ENCODE measurements at regions of chr7 and their contacts with region 1.

Region 1: GRCh38 chr7:53794816-53795215 is 747.4 kb upstream of the VSTM2A start:
- DNase-seq: no peak
- H3K4me3 ChIP-seq: no peak overlapping the region
- H3K27ac ChIP-seq: no peak overlapping the region
- H3K4me1 ChIP-seq: no peaks in the 10 kb centered on the region
- H3K27me3 ChIP-seq: no peaks in the 10 kb centered on the region
- CTCF ChIP-seq: no peak
- EP300 ChIP-seq: no peak
- POLR2A ChIP-seq: no peak

Region 2: DNA sequence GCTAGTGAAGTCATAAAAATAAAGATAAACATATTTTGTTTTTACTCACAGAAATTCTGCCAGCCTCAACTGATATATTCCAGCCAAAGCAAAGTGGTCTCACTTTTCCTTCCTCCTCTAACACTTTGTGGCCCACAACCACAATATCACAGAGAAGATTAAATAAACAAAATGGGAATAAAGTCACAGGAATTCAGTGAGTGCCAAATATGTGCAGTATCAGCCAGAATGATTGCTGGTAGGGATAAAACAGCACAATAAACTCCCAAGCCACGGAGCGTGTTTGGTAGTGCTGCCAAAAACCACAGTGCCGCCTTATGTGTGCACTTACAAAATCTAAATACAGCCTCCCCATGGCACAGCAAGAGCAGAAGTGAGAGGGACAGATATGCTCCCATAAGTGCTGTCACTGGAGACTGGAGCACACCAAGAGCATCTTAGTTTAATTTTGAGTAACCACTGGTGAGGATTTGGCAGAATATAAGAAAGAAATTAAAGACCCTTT is 603.6 kb before region 1 on chr7:
- in situ Hi-C with region 1: no loop called
- intact Hi-C with region 1: no loop called
- DNase-seq: no peak
- H3K4me3 ChIP-seq: no peak overlapping the region
- H3K27ac ChIP-seq: no peak overlapping the region
- H3K4me1 ChIP-seq: no peaks in the 10 kb centered on the region
- H3K27me3 ChIP-seq: no peaks in the 10 kb centered on the region
- CTCF ChIP-seq: no peak
- EP300 ChIP-seq: no peak
- POLR2A ChIP-seq: no peak

Region 3: DNA sequence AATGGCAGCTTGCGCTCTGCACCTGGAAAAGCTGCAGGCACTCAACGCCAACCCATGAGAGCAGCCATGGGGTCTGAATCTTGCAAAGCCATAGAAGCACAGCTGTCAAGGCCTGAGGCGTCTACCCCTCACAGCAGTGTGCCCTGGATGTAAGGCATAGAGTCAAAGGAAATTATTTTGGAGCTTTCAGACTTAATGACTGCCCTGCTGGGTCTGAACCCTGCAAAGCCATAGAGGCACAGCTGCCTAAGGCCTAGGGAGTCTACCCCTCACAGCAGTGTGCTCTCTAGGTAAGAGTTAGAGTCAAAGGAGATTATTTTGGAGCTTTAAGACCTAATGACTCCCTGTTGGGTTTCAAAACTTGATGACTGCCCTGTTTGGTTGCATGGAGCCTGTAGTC is 40.5 kb after region 1 on chr7:
- in situ Hi-C with region 1: no loop called
- intact Hi-C with region 1: no loop called
- DNase-seq: no peak
- H3K4me3 ChIP-seq: no peak overlapping the region
- H3K27ac ChIP-seq: no peak overlapping the region
- H3K4me1 ChIP-seq: no peaks in the 10 kb centered on the region
- H3K27me3 ChIP-seq: no peaks in the 10 kb centered on the region
- CTCF ChIP-seq: no peak
- EP300 ChIP-seq: no peak
- POLR2A ChIP-seq: no peak

Region 4: GRCh38 chr7:53917637-53918036 is 122.8 kb after region 1 on chr7:
- in situ Hi-C with region 1: no loop called
- intact Hi-C with region 1: no loop called
- DNase-seq: no peak
- H3K4me3 ChIP-seq: no peak overlapping the region
- H3K27ac ChIP-seq: no peak overlapping the region
- H3K4me1 ChIP-seq: no peaks in the 10 kb centered on the region
- H3K27me3 ChIP-seq: no peaks in the 10 kb centered on the region
- CTCF ChIP-seq: no peak
- EP300 ChIP-seq: no peak
- POLR2A ChIP-seq: no peak

Region 5: DNA sequence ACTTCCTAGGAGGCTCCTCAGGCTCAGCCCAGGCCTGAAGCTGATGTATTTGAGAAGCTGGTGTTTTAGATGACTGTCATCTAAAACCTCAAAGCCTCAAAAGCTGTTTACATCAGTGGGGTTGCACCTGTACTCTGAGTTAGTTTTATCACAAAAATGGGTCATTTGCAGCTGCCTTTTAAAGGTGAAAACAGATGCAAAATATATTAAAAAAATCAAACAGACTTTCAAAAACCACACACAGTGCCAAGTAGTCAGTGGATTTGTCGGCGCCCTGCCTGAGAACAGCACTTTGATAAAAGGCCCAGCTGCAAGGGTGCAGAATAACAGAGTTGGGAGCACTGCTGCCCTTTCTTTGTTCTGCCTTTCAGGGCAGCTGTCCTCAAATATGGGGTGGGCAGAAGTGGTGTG is 1674.5 kb after region 1 on chr7:
- in situ Hi-C with region 1: no loop called
- intact Hi-C with region 1: loop called (anchors 5 kb)
- DNase-seq: peak; percentile 32
- H3K4me3 ChIP-seq: no peak overlapping the region
- H3K27ac ChIP-seq: peak overlapping the region in 1 of 4 donors; percentile 14
- H3K4me1 ChIP-seq: no peaks in the 10 kb centered on the region
- H3K27me3 ChIP-seq: no peaks in the 10 kb centered on the region
- CTCF ChIP-seq: no peak
- EP300 ChIP-seq: no peak
- POLR2A ChIP-seq: no peak

Measured in transverse colon (tissue), 4 donors.